Sciatic nerve (tissue), 2 donors: ENCODE measurements at regions of chr1 and their contacts with region 1.

Region 1: GRCh38 chr1:53498555-53499142 is 39.5 kb downstream of the DMRTB1 start:
- DNase-seq: no peak
- ATAC-seq: no peak

Region 2: GRCh38 chr1:53616927-53617326 is 118.3 kb after region 1 on chr1:
- intact Hi-C with region 1: loop called (anchors 10 kb)
- DNase-seq: peak; percentile 33
- ATAC-seq: no peak